ENCODE measurements at regions of chr7 and their contacts with region 1.

Region 1: DNA sequence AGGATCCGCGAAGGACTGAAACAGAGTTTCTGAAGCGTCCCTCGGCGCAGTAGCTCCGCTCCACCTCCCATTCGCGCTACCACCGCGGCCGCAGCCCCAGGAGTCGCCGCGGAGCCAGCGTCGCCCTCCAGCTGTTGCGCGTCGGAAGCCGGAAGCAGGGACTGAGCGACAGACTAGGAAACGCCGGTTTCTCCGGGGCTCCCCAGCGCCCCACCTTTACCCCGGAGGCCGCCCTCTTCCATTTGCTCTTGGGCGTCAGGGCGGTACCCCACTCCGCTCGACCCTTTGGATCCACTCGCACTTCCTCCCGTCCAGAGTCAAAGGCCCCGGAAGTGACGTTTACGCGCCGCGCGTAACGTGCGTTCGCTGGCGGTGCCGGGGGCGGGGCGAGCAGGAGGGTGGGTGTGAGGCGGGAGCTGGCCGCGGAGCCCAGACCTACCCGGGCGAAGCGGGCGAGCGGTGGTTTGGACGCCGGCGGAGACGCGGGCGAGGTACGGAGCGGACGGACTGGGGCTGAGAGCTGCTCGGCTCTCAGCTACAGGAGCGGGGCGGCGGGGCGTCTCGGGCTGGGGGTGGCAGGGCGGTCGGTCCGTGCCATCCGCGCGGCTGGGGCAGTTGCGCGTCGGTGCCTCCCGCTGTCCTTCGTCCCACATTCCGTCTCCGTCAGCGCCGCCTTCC is at the start of gene RABGEF1:
- DNase-seq: peak; percentile 96
- H3K4me3 Mint-ChIP-seq: peak within 1 kb of the TSS; percentile 90
- H3K27ac Mint-ChIP-seq: peak within 1 kb of the TSS; percentile 97
- H3K4me1 Mint-ChIP-seq: peaks cover 9% of the 10 kb centered on the region
- H3K27me3 Mint-ChIP-seq: no peaks in the 10 kb centered on the region
- CTCF ChIP-seq: no peak
- total RNA-seq, gene RABGEF1: 49.5 and 57.4 TPM in 2 replicates

Region 2: GRCh38 chr7:66423729-66424128 is 316.7 kb before region 1 on chr7:
- CTCF ChIA-PET with region 1: no interaction called
- POLR2A ChIA-PET with region 1: no interaction called
- intact Hi-C with region 1: no loop called
- DNase-seq: no peak
- H3K4me3 Mint-ChIP-seq: no peak overlapping the region
- H3K27ac Mint-ChIP-seq: no peak overlapping the region
- H3K4me1 Mint-ChIP-seq: no peaks in the 10 kb centered on the region
- H3K27me3 Mint-ChIP-seq: no peaks in the 10 kb centered on the region
- CTCF ChIP-seq: no peak

Region 3: DNA sequence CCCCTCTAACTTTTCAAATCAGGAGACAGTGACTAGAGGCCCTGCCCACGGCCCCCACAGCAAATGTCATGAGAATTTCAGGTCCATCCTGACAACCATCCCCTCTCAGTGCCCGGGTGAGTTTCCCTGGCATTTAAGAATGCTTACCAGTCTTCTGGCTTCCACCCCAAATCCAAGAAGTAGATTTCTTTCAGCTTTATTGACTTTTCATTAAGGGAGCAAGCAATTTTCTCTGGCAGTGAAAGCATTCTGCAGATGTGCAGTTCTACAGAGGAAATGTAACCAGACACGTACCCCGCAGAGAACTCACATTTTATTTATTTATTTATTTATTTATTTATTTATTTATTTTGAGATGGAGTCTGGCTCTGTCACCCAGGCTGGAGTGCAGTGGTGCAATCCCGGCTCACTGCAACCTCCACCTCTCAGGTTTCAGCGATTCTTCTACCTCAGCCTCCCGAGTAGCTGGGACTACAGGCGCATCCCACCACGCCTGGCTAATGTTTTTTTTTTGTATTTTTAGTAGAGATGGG is 232.6 kb before region 1 on chr7:
- CTCF ChIA-PET with region 1: no interaction called
- POLR2A ChIA-PET with region 1: no interaction called
- intact Hi-C with region 1: no loop called
- DNase-seq: no peak
- H3K4me3 Mint-ChIP-seq: no peak overlapping the region
- H3K27ac Mint-ChIP-seq: no peak overlapping the region
- H3K4me1 Mint-ChIP-seq: no peaks in the 10 kb centered on the region
- H3K27me3 Mint-ChIP-seq: peaks cover 12% of the 10 kb centered on the region
- CTCF ChIP-seq: no peak

Region 4: GRCh38 chr7:66591799-66592596 is 148.4 kb before region 1 on chr7:
- CTCF ChIA-PET with region 1: no interaction called
- POLR2A ChIA-PET with region 1: interaction called, 10 read pairs
- intact Hi-C with region 1: no loop called
- DNase-seq: peak; percentile 94
- H3K4me3 Mint-ChIP-seq: peak overlapping the region; percentile 94
- H3K27ac Mint-ChIP-seq: peak overlapping the region; percentile 98
- H3K4me1 Mint-ChIP-seq: peaks cover 27% of the 10 kb centered on the region
- H3K27me3 Mint-ChIP-seq: no peaks in the 10 kb centered on the region
- CTCF ChIP-seq: no peak

Region 5: GRCh38 chr7:66681491-66682349 is 58.7 kb before region 1 on chr7:
- CTCF ChIA-PET with region 1: interaction called, 3 read pairs
- POLR2A ChIA-PET with region 1: interaction called, 57 read pairs
- intact Hi-C with region 1: no loop called
- DNase-seq: peak; percentile 95
- H3K4me3 Mint-ChIP-seq: peak overlapping the region; percentile 85
- H3K27ac Mint-ChIP-seq: peak overlapping the region; percentile 95
- H3K4me1 Mint-ChIP-seq: peaks cover 10% of the 10 kb centered on the region
- H3K27me3 Mint-ChIP-seq: no peaks in the 10 kb centered on the region
- CTCF ChIP-seq: no peak

Region 6: GRCh38 chr7:66725843-66726242 is 14.6 kb before region 1 on chr7:
- CTCF ChIA-PET with region 1: no interaction called
- POLR2A ChIA-PET with region 1: interaction called, 18 read pairs
- intact Hi-C with region 1: no loop called
- DNase-seq: no peak
- H3K4me3 Mint-ChIP-seq: no peak overlapping the region
- H3K27ac Mint-ChIP-seq: no peak overlapping the region
- H3K4me1 Mint-ChIP-seq: no peaks in the 10 kb centered on the region
- H3K27me3 Mint-ChIP-seq: no peaks in the 10 kb centered on the region
- CTCF ChIP-seq: no peak

Measured in MCF 10A (cell line).